Activated T-helper 2 cell treated with anti-CD3 and anti-CD28 coated beads, Interferon-gamma antibody, Interleukin-2, Interleukin-4, amounts not matched to agents 10 μg/mL and 5 μg/mL and 100 μg/mL, durations not matched to agents 14 hours and 24 hours and 36 hours (primary cell): ENCODE measurements at regions of chr11 and their contacts with region 1.

Region 1: GRCh38 chr11:19561011-19561410 is 151.6 kb upstream of the NAV2 start:
- DNase-seq: no peak
- H3K4me3 Mint-ChIP-seq: no peak overlapping the region
- H3K27ac Mint-ChIP-seq: no peak overlapping the region
- H3K4me1 Mint-ChIP-seq: no peaks in the 10 kb centered on the region
- H3K27me3 Mint-ChIP-seq: peaks cover 8% of the 10 kb centered on the region

Region 2: GRCh38 chr11:19306179-19306944 is 254.6 kb before region 1 on chr11:
- intact Hi-C with region 1: no loop called
- DNase-seq: no peak
- H3K4me3 Mint-ChIP-seq: no peak overlapping the region
- H3K27ac Mint-ChIP-seq: no peak overlapping the region
- H3K4me1 Mint-ChIP-seq: no peaks in the 10 kb centered on the region
- H3K27me3 Mint-ChIP-seq: peaks cover 5% of the 10 kb centered on the region

Region 3: DNA sequence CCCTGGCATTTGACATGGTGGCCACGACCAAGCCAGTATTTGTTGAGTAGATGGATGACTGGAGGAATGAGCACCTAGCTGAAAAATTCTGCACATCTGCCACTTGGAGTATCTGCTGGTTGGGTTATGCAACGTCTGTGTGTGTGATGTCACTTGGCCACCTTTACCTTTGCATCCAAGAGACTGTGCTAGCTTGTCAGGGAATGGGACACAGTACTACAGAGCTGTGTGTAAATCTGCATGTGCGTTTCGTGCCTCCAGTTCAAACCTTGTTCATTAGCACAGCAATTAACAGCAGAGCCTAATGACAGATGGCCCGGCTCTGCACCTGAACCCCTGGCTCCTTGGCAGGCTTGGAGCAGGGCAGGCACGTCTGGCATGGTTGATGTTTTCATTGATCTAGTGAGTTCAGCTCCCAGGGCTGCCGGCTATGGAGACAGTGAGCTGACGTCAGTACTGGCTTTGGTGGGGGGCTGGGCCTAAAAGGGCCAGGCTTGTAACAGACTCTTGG is 36.8 kb before region 1 on chr11:
- intact Hi-C with region 1: no loop called
- DNase-seq: no peak
- H3K4me3 Mint-ChIP-seq: no peak overlapping the region
- H3K27ac Mint-ChIP-seq: no peak overlapping the region
- H3K4me1 Mint-ChIP-seq: no peaks in the 10 kb centered on the region
- H3K27me3 Mint-ChIP-seq: peaks cover 1% of the 10 kb centered on the region

Region 4: DNA sequence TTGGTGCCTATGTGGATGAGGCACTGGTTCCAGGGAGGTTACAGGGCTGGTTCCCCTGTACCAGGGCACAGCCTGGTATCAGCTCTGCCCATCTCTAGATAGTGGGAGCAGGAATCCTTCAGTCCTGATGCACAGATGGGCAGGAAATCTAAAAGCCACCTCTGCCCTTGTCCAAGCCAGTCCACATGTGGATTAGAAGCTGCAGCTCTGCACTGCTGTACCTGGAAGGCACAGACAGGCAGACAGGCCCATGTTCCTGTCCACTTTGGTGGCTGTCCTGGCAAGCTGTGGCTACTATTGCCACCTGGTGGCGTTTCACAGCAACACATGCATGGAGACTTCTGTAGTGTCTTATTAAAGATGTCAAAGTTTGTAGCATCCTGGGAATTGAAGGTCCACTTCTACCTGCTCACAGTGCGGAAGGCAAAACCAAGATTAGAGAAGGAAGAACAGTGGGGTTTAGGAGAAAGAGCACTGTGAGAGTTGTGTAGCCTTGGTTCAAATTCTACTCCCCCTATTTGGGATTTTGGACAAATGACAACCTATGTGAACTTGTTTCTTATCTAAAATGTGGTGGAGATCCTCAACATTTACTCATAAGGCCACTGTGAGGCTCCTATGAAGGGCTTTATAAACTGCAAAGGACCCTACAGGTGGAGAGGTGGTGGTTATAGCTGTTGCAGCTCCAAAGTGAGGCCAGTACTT is 181.7 kb after region 1 on chr11:
- intact Hi-C with region 1: loop called (anchors 1 kb)
- DNase-seq: peak; percentile 36
- H3K4me3 Mint-ChIP-seq: no peak overlapping the region
- H3K27ac Mint-ChIP-seq: no peak overlapping the region
- H3K4me1 Mint-ChIP-seq: no peaks in the 10 kb centered on the region
- H3K27me3 Mint-ChIP-seq: peaks cover 7% of the 10 kb centered on the region

Region 5: DNA sequence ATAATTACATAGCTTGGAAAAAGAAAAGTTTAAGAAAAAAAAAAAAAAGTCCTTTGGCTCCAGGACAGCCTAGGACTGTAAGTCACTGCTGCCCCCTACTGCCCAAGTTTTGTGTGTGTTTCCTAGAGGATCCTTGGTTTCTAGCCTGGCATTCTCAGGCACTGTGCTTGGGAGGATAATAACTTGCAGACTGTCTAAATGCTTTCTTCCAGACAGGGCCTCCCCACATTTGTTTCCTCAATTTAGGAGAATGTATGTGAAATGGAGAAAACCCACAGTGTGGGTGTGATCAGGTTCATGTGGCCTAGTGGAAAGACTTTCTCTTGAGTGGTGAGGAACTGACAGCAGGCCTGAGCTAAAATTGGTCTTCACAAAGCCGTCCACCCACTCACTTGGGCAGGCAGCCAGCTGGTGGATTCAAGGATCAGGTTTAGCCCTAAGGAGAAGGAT is 342.6 kb after region 1 on chr11:
- intact Hi-C with region 1: loop called (anchors 5 kb)
- DNase-seq: no peak
- H3K4me3 Mint-ChIP-seq: no peak overlapping the region
- H3K27ac Mint-ChIP-seq: no peak overlapping the region
- H3K4me1 Mint-ChIP-seq: no peaks in the 10 kb centered on the region
- H3K27me3 Mint-ChIP-seq: peaks cover 3% of the 10 kb centered on the region